ENCODE measurements at regions of chr3 and their contacts with region 1.

Region 1: GRCh38 chr3:10142707-10143566 is 1.4 kb downstream of the VHL start:
- DNase-seq: peak in 3 of 5 donors; percentile 14 to 46 (median 18)
- H3K4me3 ChIP-seq: peak overlapping the region; percentile 55 to 95
- H3K4me3 Mint-ChIP-seq: peak overlapping the region; percentile 90 to 98 (median 95)
- H3K27ac ChIP-seq: peak overlapping the region; percentile 94
- H3K27ac Mint-ChIP-seq: peak overlapping the region; percentile 88 to 99 (median 96)
- H3K4me1 ChIP-seq: peaks cover 45% of the 10 kb centered on the region
- H3K4me1 Mint-ChIP-seq: peaks cover 22 to 58% (median 32%) of the 10 kb centered on the region in 4 donors
- H3K27me3 ChIP-seq: no peaks in the 10 kb centered on the region
- H3K27me3 Mint-ChIP-seq: no peaks in the 10 kb centered on the region

Region 2: DNA sequence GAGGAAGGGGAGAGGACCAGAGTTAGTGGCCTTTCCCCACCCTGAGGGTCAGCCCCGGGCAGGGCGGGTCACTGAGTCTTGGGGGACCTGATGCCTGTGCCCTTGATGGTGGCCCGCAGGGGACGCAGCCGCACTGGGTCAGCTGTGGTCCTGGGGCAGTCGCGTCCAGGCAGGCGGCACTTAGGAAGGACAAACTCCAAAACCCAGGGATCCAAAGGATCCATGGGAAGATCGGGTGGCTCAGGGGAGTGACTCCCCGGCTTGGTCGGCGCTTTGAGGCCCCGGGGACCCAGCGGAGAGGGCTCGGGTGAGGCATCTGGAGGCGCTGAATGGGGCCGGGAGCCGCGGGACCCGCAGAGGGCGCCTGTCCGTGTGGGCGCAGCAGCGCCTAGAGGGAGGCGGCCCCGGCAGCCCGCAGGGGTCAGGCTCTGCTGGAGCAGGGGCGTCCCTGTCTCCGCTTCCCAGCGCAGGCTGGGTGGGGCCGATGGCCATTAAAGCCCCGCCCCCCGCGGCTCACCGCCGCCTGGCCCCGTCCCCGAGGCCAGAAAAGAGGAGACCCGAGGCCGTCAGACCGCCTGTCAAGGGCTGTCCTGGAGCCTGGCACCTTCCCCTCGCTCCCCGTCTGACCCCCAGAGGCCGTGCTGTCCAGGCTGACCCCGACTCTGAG is 280.4 kb before region 1 on chr3:
- CTCF ChIA-PET with region 1: no interaction called
- POLR2A ChIA-PET with region 1: no interaction called
- intact Hi-C with region 1: no loop called
- DNase-seq: peak in 3 of 5 donors; percentile 13 to 19 (median 15)
- H3K4me3 ChIP-seq: no peak overlapping the region
- H3K4me3 Mint-ChIP-seq: peak overlapping the region in 3 of 8 donors; percentile 28 to 73 (median 59)
- H3K27ac ChIP-seq: no peak overlapping the region
- H3K27ac Mint-ChIP-seq: no peak overlapping the region
- H3K4me1 ChIP-seq: no peaks in the 10 kb centered on the region
- H3K4me1 Mint-ChIP-seq: peaks cover 0 to 4% (median 0%) of the 10 kb centered on the region in 4 donors
- H3K27me3 ChIP-seq: peaks cover 7% of the 10 kb centered on the region
- H3K27me3 Mint-ChIP-seq: peaks cover 5 to 8% of the 10 kb centered on the region in 2 donors

Region 3: GRCh38 chr3:10115326-10116137 is 27.4 kb before region 1 on chr3 and contains the start of gene BRK1:
- CTCF ChIA-PET with region 1: no interaction called
- POLR2A ChIA-PET with region 1: interaction called, 8 read pairs
- intact Hi-C with region 1: loop called (anchors 1 kb)
- DNase-seq: peak; percentile 89 to 95 (median 93)
- H3K4me3 ChIP-seq: peak within 1 kb of the TSS; percentile 89 to 98
- H3K4me3 Mint-ChIP-seq: peak within 1 kb of the TSS; percentile 95 to 100 (median 99)
- H3K27ac ChIP-seq: peak within 1 kb of the TSS; percentile 84
- H3K27ac Mint-ChIP-seq: peak within 1 kb of the TSS; percentile 96 to 100 (median 98)
- H3K4me1 ChIP-seq: peaks cover 39% of the 10 kb centered on the region
- H3K4me1 Mint-ChIP-seq: peaks cover 22 to 52% (median 31%) of the 10 kb centered on the region in 4 donors
- H3K27me3 ChIP-seq: no peaks in the 10 kb centered on the region
- H3K27me3 Mint-ChIP-seq: peaks cover 0 to 1% of the 10 kb centered on the region in 2 donors
- total RNA-seq, gene BRK1: 73.0 to 78.1 TPM

Region 4: DNA sequence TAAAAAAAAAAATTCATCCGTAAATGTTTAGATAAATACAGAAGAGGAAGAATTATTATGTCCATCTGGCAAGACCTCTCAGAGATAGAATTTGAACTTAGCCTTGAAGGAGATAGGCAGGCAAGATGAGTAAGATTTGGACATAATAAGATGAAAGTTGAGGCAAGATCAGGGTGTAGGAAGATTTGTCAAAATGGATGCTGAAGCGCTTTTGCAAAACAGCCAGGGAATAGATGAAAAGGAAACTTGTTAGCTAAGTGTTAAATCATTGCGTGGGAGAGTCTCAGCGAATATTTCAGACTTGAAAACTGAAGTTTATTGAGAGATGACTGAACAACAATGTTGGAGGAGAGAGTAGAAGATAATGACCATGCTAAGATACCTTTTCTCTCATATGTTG is 20.2 kb before region 1 on chr3:
- CTCF ChIA-PET with region 1: no interaction called
- POLR2A ChIA-PET with region 1: interaction called, 12 read pairs
- intact Hi-C with region 1: no loop called
- DNase-seq: no peak
- H3K4me3 ChIP-seq: no peak overlapping the region
- H3K4me3 Mint-ChIP-seq: no peak overlapping the region
- H3K27ac ChIP-seq: no peak overlapping the region
- H3K27ac Mint-ChIP-seq: peak overlapping the region in 4 of 7 donors; percentile 44 to 84 (median 68)
- H3K4me1 ChIP-seq: peaks cover 26% of the 10 kb centered on the region
- H3K4me1 Mint-ChIP-seq: peaks cover 28 to 45% (median 37%) of the 10 kb centered on the region in 4 donors
- H3K27me3 ChIP-seq: no peaks in the 10 kb centered on the region
- H3K27me3 Mint-ChIP-seq: no peaks in the 10 kb centered on the region

Region 5: GRCh38 chr3:10192953-10193691 is 50.2 kb after region 1 on chr3:
- CTCF ChIA-PET with region 1: interaction called, 4 read pairs
- POLR2A ChIA-PET with region 1: interaction called, 25 read pairs
- intact Hi-C with region 1: loop called (anchors 2 kb)
- DNase-seq: peak; percentile 54 to 77 (median 56)
- H3K4me3 ChIP-seq: peak overlapping the region in 1 of 2 donors; percentile 33
- H3K4me3 Mint-ChIP-seq: peak overlapping the region; percentile 69 to 89 (median 82)
- H3K27ac ChIP-seq: peak overlapping the region; percentile 87
- H3K27ac Mint-ChIP-seq: peak overlapping the region; percentile 98 to 100 (median 99)
- H3K4me1 ChIP-seq: peaks cover 92% of the 10 kb centered on the region
- H3K4me1 Mint-ChIP-seq: peaks cover 64 to 90% (median 77%) of the 10 kb centered on the region in 4 donors
- H3K27me3 ChIP-seq: no peaks in the 10 kb centered on the region
- H3K27me3 Mint-ChIP-seq: no peaks in the 10 kb centered on the region

Region 6: DNA sequence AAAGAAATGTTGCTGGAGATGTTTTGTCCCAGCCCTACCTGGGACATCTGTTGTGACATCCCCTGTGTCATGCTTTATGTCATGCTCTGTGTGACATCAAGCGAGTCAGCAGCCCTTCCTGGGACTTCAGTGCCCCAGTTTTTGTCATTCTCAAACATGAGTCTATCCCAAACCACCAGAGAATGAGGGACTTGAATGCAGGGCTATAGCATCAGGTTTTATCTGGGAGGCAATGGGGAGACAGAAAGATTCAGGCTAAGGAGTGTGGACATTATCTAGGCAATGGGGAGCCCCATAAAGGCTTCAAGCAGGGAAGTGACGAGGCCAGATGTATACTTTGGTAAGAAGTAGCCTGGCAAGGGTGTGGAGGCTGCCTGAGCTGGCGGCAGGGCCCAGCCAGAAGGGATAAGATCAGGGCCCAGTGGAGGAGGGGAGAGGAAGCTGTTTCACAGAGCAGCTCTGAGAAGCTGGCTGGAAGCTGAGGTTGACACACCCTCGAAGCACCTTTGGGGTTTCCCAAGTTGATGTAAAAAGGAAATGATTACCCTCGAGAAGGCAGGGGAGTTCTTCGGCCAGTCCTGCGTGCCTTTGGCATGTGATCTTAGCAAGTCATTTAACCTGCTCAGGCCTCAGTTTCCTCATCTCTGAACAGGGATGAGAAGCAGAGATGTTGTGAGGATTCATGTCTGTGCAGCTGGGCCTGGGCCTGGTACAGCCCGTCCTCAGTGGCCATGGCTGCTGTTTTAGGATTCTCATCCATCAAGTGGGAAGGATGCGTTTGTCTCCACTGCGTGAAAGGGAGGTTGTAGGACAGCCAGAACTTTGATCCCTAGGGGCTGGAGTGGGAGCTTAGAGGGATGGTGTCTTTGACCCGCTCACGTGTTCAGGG is 56.1 kb after region 1 on chr3:
- CTCF ChIA-PET with region 1: interaction called, 4 read pairs
- POLR2A ChIA-PET with region 1: interaction called, 25 read pairs
- intact Hi-C with region 1: loop called (anchors 2 kb)
- DNase-seq: peak; percentile 76 to 95 (median 80)
- H3K4me3 ChIP-seq: peak overlapping the region; percentile 2 to 21
- H3K4me3 Mint-ChIP-seq: peak overlapping the region in 7 of 8 donors; percentile 55 to 79 (median 73)
- H3K27ac ChIP-seq: peak overlapping the region; percentile 88
- H3K27ac Mint-ChIP-seq: peak overlapping the region; percentile 95 to 99 (median 97)
- H3K4me1 ChIP-seq: peaks cover 84% of the 10 kb centered on the region
- H3K4me1 Mint-ChIP-seq: peaks cover 42 to 81% (median 63%) of the 10 kb centered on the region in 4 donors
- H3K27me3 ChIP-seq: no peaks in the 10 kb centered on the region
- H3K27me3 Mint-ChIP-seq: no peaks in the 10 kb centered on the region

Region 7: DNA sequence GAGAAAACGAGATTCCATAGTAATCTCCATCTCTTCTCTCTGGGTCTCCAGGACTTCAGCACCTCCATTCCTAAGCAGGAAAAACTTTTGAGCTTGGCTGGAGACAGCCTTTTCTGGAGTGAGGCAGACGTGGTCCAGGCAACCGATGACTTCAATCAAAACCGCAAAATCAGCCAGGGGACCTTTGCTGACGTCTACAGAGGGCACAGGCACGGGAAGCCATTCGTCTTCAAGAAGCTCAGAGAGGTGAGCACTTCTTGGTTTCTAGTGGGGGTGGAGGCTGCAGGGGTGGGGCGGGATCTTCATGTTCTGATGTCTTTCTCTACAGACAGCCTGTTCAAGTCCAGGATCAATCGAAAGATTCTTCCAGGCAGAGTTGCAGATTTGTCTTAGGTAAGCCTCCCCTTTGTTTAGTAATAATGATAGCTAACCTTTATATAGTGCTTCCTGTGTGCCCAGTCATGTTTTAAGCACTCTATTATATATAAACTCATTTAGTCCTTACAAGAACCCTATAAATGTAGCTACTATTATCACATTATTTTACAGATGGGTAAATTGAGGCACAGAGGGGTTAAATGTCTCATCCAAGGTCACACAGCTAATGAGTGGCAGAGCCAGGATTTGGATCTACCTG is 70.3 kb after region 1 on chr3:
- CTCF ChIA-PET with region 1: no interaction called
- POLR2A ChIA-PET with region 1: no interaction called
- intact Hi-C with region 1: no loop called
- DNase-seq: no peak
- H3K4me3 ChIP-seq: no peak overlapping the region
- H3K4me3 Mint-ChIP-seq: no peak overlapping the region
- H3K27ac ChIP-seq: no peak overlapping the region
- H3K27ac Mint-ChIP-seq: peak overlapping the region in 3 of 7 donors; percentile 47 to 74 (median 53)
- H3K4me1 ChIP-seq: no peaks in the 10 kb centered on the region
- H3K4me1 Mint-ChIP-seq: peaks cover 0 to 6% (median 0%) of the 10 kb centered on the region in 4 donors
- H3K27me3 ChIP-seq: no peaks in the 10 kb centered on the region
- H3K27me3 Mint-ChIP-seq: no peaks in the 10 kb centered on the region

Region 8: DNA sequence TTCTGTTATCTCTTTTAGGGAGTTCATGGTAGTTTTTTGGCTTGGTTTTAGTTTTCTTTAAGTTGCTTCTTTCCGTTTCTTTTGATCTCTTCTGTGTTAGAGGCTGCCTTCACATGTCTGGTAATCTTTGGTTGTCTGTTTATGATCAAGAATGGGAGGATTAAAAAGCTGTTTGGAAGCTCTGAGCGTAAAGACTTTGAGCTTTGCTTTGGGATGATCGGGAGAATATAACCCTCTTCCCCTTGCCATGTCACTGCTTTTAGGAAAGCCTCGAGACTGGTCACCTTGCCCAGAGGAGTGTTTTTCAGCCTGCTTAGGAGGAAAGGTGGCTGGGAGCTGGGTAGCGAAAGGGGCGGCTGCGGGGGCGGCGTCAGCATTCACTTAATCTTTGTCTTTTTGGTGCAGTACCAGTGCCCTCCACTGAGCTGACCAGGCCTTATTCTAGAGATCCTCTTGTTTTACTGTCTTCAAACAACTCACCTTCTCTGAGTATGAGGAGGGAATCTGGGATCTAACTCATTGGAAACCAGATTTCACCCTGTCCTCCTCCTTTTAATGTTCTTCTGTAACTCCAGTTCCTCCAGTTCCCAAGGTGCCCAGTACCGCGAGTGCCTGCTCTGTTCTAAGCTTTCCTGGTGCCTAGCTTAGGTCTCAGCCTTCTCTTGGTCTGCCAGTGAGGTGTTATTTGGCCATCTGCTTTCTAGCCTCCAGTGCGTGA is 120.9 kb after region 1 on chr3:
- CTCF ChIA-PET with region 1: interaction called, 9 read pairs
- POLR2A ChIA-PET with region 1: interaction called, 10 read pairs
- intact Hi-C with region 1: no loop called
- DNase-seq: peak; percentile 66 to 80 (median 71)
- H3K4me3 ChIP-seq: peak overlapping the region in 1 of 2 donors; percentile 22
- H3K4me3 Mint-ChIP-seq: peak overlapping the region; percentile 72 to 91 (median 80)
- H3K27ac ChIP-seq: peak overlapping the region; percentile 64
- H3K27ac Mint-ChIP-seq: peak overlapping the region; percentile 78 to 97 (median 91)
- H3K4me1 ChIP-seq: peaks cover 83% of the 10 kb centered on the region
- H3K4me1 Mint-ChIP-seq: peaks cover 48 to 93% (median 76%) of the 10 kb centered on the region in 4 donors
- H3K27me3 ChIP-seq: no peaks in the 10 kb centered on the region
- H3K27me3 Mint-ChIP-seq: no peaks in the 10 kb centered on the region